ENCODE measurements at regions of chr13 and their contacts with region 1.

Region 1: DNA sequence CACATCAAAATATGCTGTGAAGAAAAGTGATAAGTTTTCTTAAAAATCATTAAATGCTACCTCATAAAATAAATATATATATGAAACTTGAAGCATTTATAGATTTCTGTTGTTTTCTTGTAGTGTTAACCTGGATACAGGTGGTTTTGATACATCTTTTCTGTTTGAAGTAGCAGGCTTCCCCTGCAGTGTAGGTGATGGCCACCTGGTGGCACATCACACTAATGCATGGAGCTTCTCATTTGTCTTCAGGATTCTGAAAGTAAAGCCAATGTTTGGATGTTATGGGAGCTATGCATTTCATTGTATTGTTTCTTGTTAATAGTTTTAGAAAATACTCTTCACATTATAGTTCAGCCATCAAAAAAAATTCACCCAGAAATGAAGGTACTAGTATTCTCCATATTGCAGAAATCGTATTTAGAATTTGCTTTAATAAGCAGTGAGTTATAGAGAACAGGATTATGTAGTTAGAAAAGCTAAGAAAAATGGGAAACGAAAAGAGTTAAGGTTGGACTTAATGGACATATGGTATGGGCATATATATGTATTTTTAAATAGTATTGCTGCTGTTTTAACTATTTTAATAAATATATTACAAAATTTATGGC is 18.7 kb downstream of the GPR180 start:
- DNase-seq: peak in 3 of 5 donors; percentile 6 to 17 (median 7)
- H3K4me3 ChIP-seq: no peak overlapping the region
- H3K4me3 Mint-ChIP-seq: no peak overlapping the region
- H3K27ac ChIP-seq: no peak overlapping the region
- H3K27ac Mint-ChIP-seq: no peak overlapping the region
- H3K4me1 ChIP-seq: peaks cover 9% of the 10 kb centered on the region
- H3K4me1 Mint-ChIP-seq: peaks cover 8 to 14% (median 11%) of the 10 kb centered on the region in 4 donors
- H3K27me3 ChIP-seq: no peaks in the 10 kb centered on the region
- H3K27me3 Mint-ChIP-seq: no peaks in the 10 kb centered on the region

Region 2: DNA sequence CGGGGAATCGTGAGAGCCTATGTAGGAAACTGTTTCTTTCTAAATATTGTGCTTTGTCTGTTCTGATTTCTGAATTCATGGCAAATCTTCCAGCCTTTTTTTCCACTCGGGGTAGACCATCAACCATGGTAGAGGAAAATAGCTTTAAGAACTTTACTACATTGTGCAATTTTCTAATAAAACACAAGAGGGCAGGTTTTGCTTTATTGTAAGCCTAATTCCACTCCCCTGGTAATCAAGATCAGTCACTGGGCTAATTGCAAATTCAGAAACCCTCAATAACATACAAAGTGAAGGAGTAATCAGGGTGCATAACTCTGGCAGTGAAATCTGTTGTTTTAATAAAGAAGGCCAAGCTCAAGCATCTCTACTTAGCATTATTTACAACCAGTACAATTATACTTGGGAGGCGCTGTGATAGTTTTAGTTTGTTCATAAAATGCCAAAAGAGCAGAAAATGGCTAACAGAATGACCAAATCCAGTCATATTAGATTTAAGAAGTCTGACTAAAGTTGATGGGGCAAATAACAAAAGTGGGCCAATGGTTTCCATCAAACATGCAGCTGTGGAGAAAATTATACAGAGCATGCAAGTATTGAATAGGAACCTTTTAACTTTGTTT is 184.7 kb before region 1 on chr13:
- CTCF ChIA-PET with region 1: interaction called, 532 read pairs
- POLR2A ChIA-PET with region 1: interaction called, 3 read pairs
- intact Hi-C with region 1: loop called (anchors 1 kb)
- DNase-seq: peak in 4 of 5 donors; percentile 38 to 52 (median 44)
- H3K4me3 ChIP-seq: no peak overlapping the region
- H3K4me3 Mint-ChIP-seq: no peak overlapping the region
- H3K27ac ChIP-seq: no peak overlapping the region
- H3K27ac Mint-ChIP-seq: no peak overlapping the region
- H3K4me1 ChIP-seq: no peaks in the 10 kb centered on the region
- H3K4me1 Mint-ChIP-seq: peaks cover 0 to 3% (median 0%) of the 10 kb centered on the region in 4 donors
- H3K27me3 ChIP-seq: no peaks in the 10 kb centered on the region
- H3K27me3 Mint-ChIP-seq: peaks cover 0 to 1% of the 10 kb centered on the region in 2 donors

Region 3: DNA sequence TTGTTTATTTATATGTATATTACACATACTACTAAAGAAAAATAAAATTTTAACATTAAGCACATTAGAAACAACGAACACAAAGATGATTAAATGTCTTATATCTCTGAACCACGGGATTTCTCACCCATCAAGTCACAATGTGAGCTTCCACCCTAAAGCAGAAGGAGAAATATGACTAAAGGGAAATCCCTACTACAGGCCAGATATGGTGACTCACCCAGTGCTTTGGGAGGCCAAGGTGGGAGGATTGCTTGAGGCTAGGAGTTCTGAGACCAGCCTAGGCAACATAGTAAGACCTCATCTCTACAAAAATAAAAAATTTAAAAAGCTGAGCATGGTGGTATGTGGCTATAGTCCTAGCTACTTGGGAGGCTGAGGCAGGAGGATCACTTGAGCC is 165.5 kb before region 1 on chr13:
- CTCF ChIA-PET with region 1: interaction called, 10 read pairs
- POLR2A ChIA-PET with region 1: no interaction called
- intact Hi-C with region 1: no loop called
- DNase-seq: no peak
- H3K4me3 ChIP-seq: no peak overlapping the region
- H3K4me3 Mint-ChIP-seq: no peak overlapping the region
- H3K27ac ChIP-seq: no peak overlapping the region
- H3K27ac Mint-ChIP-seq: no peak overlapping the region
- H3K4me1 ChIP-seq: no peaks in the 10 kb centered on the region
- H3K4me1 Mint-ChIP-seq: no peaks in the 10 kb centered on the region
- H3K27me3 ChIP-seq: no peaks in the 10 kb centered on the region
- H3K27me3 Mint-ChIP-seq: peaks cover 3 to 4% of the 10 kb centered on the region in 2 donors

Region 4: GRCh38 chr13:94549232-94550061 is 70.9 kb before region 1 on chr13:
- CTCF ChIA-PET with region 1: interaction called, 26 read pairs
- POLR2A ChIA-PET with region 1: interaction called, 3 read pairs
- intact Hi-C with region 1: no loop called
- DNase-seq: peak; percentile 92 to 94 (median 93)
- H3K4me3 ChIP-seq: peak overlapping the region; percentile 63 to 98
- H3K4me3 Mint-ChIP-seq: peak overlapping the region; percentile 88 to 95 (median 93)
- H3K27ac ChIP-seq: peak overlapping the region; percentile 87
- H3K27ac Mint-ChIP-seq: peak overlapping the region; percentile 94 to 100 (median 96)
- H3K4me1 ChIP-seq: peaks cover 15% of the 10 kb centered on the region
- H3K4me1 Mint-ChIP-seq: peaks cover 11 to 26% (median 17%) of the 10 kb centered on the region in 4 donors
- H3K27me3 ChIP-seq: no peaks in the 10 kb centered on the region
- H3K27me3 Mint-ChIP-seq: peaks cover 2 to 5% of the 10 kb centered on the region in 2 donors

Region 5: GRCh38 chr13:94595950-94596574 is 24.3 kb before region 1 on chr13 and contains the start of gene TGDS:
- CTCF ChIA-PET with region 1: interaction called, 41 read pairs
- POLR2A ChIA-PET with region 1: interaction called, 7 read pairs
- intact Hi-C with region 1: no loop called
- DNase-seq: peak; percentile 86 to 90 (median 88)
- H3K4me3 ChIP-seq: peak within 1 kb of the TSS; percentile 78 to 87
- H3K4me3 Mint-ChIP-seq: peak within 1 kb of the TSS; percentile 92 to 98 (median 94)
- H3K27ac ChIP-seq: peak within 1 kb of the TSS; percentile 75
- H3K27ac Mint-ChIP-seq: peak within 1 kb of the TSS; percentile 85 to 97 (median 94)
- H3K4me1 ChIP-seq: peaks cover 34% of the 10 kb centered on the region
- H3K4me1 Mint-ChIP-seq: peaks cover 28 to 43% (median 37%) of the 10 kb centered on the region in 4 donors
- H3K27me3 ChIP-seq: no peaks in the 10 kb centered on the region
- H3K27me3 Mint-ChIP-seq: no peaks in the 10 kb centered on the region
- total RNA-seq, gene TGDS: 15.9 to 16.8 TPM

Region 6: DNA sequence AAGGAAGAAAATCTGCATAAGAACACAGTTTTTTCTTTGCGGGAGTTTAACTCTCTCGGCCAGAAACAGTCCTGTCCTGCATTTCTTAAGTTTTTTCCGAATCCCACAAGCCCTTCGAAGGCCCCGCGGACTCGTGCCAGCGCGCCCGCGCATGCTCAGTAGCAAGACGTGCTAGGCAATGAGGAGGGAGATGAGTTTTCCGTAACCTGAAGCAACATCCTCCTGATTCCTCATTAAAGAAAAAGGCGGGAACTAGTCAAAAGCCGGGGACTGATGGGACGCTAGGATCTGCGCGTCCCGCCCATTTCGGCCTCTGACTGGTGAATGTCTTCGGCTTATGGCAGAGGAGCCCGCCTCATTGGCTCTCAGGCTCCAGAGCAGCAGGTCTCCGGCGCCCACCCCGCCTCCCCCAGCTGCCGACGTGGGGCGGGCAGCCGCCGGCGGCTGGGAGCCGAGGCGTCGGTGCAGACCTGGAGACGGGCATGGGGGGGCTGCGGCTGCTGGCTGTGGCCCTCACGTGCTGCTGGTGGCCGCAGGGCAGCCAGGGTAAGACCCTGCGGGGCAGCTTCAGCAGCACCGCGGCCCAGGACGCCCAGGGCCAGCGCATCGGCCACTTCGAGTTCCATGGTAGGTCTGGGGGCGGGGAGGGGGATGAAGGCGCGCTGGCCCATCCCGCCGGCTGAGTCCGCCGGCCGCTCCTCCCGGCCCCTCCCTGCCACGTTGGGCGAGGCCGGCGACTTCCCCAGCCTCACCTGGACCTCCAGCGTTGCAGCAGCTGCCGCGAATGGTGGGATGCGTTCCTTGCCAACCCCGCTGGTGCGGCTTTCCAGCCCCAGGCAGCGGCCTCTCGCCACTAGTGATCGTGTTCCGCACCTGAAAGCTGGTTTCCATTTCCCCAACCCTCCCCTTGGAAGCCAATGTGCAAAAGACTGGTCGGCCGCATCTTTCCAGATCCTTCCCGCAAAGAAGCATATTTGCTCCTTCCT is 18.7 kb before region 1 on chr13 and contains the start of gene GPR180:
- CTCF ChIA-PET with region 1: interaction called, 41 read pairs
- POLR2A ChIA-PET with region 1: interaction called, 7 read pairs
- intact Hi-C with region 1: loop called (anchors 1 kb)
- DNase-seq: peak; percentile 86 to 93 (median 89)
- H3K4me3 ChIP-seq: peak within 1 kb of the TSS; percentile 36 to 85
- H3K4me3 Mint-ChIP-seq: peak within 1 kb of the TSS; percentile 83 to 92 (median 86)
- H3K27ac ChIP-seq: peak within 1 kb of the TSS; percentile 57
- H3K27ac Mint-ChIP-seq: peak within 1 kb of the TSS; percentile 86 to 95 (median 92)
- H3K4me1 ChIP-seq: peaks cover 18% of the 10 kb centered on the region
- H3K4me1 Mint-ChIP-seq: peaks cover 22 to 36% (median 29%) of the 10 kb centered on the region in 4 donors
- H3K27me3 ChIP-seq: no peaks in the 10 kb centered on the region
- H3K27me3 Mint-ChIP-seq: no peaks in the 10 kb centered on the region
- total RNA-seq, gene GPR180: 4.8 to 5.3 TPM

Region 7: DNA sequence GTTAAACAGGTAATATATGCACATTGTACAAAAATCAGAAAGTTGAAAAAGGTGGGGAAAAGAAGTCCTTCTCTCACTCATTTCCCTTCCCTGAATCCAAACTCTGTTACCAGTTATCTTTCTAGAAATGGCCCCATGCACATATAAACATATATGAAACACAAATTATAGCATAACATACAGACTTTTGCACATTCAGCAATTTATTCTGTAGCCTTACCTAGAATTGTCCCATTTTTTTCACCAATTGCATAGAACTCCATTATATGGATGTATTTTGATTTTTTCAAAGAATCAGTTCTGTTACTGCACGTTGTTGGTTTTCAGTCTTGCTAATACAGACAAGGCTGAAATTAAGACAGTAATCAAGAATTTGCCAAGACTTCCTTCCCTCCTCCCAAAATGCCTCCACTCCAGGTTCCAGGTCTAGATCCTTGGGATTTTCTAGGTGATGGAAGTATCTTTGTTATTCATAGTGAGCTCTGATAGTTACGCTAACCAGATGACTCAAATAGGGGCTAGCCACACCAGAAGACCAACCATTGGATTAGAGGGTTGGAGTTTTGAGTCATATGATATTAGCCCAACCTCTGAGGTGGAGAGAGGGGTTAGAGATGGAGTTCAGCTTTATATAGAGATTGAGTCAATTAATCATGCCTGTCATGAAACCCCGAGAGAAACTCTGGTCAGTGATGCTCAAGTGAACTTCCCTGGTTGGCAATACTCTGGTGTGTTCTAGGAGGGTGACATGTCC is 12.0 kb after region 1 on chr13:
- CTCF ChIA-PET with region 1: interaction called, 13 read pairs
- POLR2A ChIA-PET with region 1: no interaction called
- intact Hi-C with region 1: no loop called
- DNase-seq: no peak
- H3K4me3 ChIP-seq: no peak overlapping the region
- H3K4me3 Mint-ChIP-seq: no peak overlapping the region
- H3K27ac ChIP-seq: no peak overlapping the region
- H3K27ac Mint-ChIP-seq: peak overlapping the region in 1 of 7 donors; percentile 1
- H3K4me1 ChIP-seq: no peaks in the 10 kb centered on the region
- H3K4me1 Mint-ChIP-seq: no peaks in the 10 kb centered on the region
- H3K27me3 ChIP-seq: no peaks in the 10 kb centered on the region
- H3K27me3 Mint-ChIP-seq: no peaks in the 10 kb centered on the region

Region 8: DNA sequence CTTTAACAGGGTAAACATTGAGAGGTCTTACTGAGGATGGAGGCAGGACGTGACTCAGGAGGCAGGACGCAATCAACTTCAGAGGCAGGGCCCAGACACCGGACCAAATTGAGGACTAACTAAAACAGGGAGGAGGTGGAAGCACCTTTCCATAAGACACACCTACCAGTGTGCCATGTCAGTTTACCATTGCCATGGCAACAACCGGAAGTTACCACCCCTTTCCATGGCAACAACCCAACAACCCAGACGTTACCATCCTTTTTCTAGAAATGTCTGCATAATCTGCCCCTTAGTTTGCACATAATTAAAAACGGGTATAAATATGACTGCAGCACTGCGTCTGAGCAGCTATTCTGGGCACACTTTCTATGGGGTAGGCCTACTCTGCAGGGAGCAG is 145.4 kb after region 1 on chr13:
- CTCF ChIA-PET with region 1: no interaction called
- POLR2A ChIA-PET with region 1: no interaction called
- intact Hi-C with region 1: no loop called
- DNase-seq: no peak
- H3K4me3 ChIP-seq: no peak overlapping the region
- H3K4me3 Mint-ChIP-seq: no peak overlapping the region
- H3K27ac ChIP-seq: no peak overlapping the region
- H3K27ac Mint-ChIP-seq: no peak overlapping the region
- H3K4me1 ChIP-seq: no peaks in the 10 kb centered on the region
- H3K4me1 Mint-ChIP-seq: no peaks in the 10 kb centered on the region
- H3K27me3 ChIP-seq: peaks cover 4% of the 10 kb centered on the region
- H3K27me3 Mint-ChIP-seq: peaks cover 10 to 22% of the 10 kb centered on the region in 2 donors

Region 9: DNA sequence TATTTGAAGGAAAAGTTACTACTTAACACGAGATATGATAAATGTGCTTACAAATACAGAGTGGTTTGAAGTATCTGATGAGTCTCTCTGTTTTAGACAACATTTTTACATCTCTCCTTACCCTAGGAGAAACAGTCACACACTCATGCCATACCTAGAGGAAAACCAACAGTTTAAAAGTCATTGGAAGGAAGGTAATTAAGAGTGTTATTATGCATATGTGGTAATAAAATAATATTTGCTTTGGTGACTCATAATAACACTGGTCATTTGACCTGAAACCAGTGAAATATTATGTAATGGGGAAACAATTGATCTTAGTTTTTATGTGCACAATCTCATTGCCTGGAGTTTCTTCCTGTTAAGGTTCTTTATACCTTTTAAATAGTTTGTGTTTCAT is 228.9 kb after region 1 on chr13:
- CTCF ChIA-PET with region 1: no interaction called
- POLR2A ChIA-PET with region 1: no interaction called
- intact Hi-C with region 1: no loop called
- DNase-seq: no peak
- H3K4me3 ChIP-seq: no peak overlapping the region
- H3K4me3 Mint-ChIP-seq: no peak overlapping the region
- H3K27ac ChIP-seq: no peak overlapping the region
- H3K27ac Mint-ChIP-seq: no peak overlapping the region
- H3K4me1 ChIP-seq: no peaks in the 10 kb centered on the region
- H3K4me1 Mint-ChIP-seq: no peaks in the 10 kb centered on the region
- H3K27me3 ChIP-seq: no peaks in the 10 kb centered on the region
- H3K27me3 Mint-ChIP-seq: peaks cover 0 to 6% of the 10 kb centered on the region in 2 donors